Right lobe of liver (tissue), 6 donors: ENCODE measurements at regions of chr1 and their contacts with region 1.

Region 1: DNA sequence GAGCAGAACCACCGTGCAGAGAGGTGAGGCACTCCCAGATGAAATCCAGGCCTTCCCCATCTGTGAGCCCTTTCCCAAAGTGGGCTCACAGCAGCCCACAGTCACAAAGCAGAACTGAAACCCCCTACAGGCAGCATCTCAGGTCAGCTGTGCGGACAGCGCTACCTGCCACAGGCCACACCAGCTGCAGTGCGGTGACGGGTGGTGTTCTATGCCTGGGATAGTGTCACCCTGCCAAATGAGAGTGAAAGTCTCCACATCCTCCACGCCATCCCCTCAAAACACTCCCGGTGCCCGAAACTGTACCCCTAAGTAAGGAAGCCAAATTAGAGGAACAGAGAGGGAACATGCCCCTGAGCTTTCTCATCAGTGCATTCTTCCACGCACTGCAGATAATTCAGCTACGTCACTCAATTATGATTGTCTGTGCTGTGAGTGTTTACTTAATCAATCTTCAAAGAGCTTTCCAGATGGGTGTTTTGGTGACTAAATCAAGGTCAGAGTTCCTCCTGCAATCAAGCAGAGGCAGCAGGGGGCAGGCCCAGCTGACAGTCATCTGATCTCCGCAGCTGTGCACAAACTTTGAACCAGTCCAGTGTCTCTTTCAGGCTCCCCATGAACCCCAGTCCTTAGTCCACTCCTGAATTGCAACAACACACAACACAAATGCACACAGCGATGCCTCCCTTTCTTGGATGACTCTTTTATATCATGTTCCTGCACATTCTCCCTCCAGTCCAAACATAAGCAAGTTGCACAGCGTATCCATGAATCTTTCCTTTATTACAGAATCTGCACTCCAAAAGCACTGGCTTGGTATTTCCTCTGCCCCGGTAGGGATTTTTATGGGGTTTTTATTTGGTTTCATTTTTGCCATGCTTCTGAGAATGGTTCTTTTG is 150.0 kb downstream of the TOMM20 start:
- DNase-seq: peak; percentile 80 to 92 (median 88)
- ATAC-seq: peak; percentile 39 to 71 (median 54)
- H3K4me3 ChIP-seq: peak overlapping the region in 1 of 3 donors; percentile 5
- H3K27ac ChIP-seq: peak overlapping the region; percentile 95 to 99 (median 98)
- H3K4me1 ChIP-seq: peaks cover 0 to 69% (median 33%) of the 10 kb centered on the region in 4 donors
- H3K27me3 ChIP-seq: no peaks in the 10 kb centered on the region
- CTCF ChIP-seq: peak in 2 of 4 donors; percentile 5 to 11
- POLR2A ChIP-seq: peak; percentile 21

Region 2: GRCh38 chr1:234533975-234534876 is 444.4 kb before region 1 on chr1:
- intact Hi-C with region 1: loop called in 1 of 2 experiments (anchors 10 kb)
- DNase-seq: peak; percentile 92 to 99 (median 95)
- ATAC-seq: peak; percentile 12 to 49 (median 19)
- H3K4me3 ChIP-seq: no peak overlapping the region
- H3K27ac ChIP-seq: peak overlapping the region; percentile 90 to 99 (median 98)
- H3K4me1 ChIP-seq: peaks cover 4 to 74% (median 47%) of the 10 kb centered on the region in 4 donors
- H3K27me3 ChIP-seq: no peaks in the 10 kb centered on the region
- CTCF ChIP-seq: no peak
- POLR2A ChIP-seq: peak; percentile 19

Region 3: GRCh38 chr1:235075188-235075926 is 96.7 kb after region 1 on chr1:
- intact Hi-C with region 1: loop called (anchors 5 to 10 kb)
- DNase-seq: peak; percentile 67 to 83 (median 74)
- ATAC-seq: peak; percentile 26 to 55 (median 50)
- H3K4me3 ChIP-seq: peak overlapping the region; percentile 3 to 21 (median 19)
- H3K27ac ChIP-seq: peak overlapping the region; percentile 88 to 97 (median 94)
- H3K4me1 ChIP-seq: peaks cover 0 to 77% (median 40%) of the 10 kb centered on the region in 4 donors
- H3K27me3 ChIP-seq: no peaks in the 10 kb centered on the region
- CTCF ChIP-seq: no peak
- POLR2A ChIP-seq: peak; percentile 62

Region 4: DNA sequence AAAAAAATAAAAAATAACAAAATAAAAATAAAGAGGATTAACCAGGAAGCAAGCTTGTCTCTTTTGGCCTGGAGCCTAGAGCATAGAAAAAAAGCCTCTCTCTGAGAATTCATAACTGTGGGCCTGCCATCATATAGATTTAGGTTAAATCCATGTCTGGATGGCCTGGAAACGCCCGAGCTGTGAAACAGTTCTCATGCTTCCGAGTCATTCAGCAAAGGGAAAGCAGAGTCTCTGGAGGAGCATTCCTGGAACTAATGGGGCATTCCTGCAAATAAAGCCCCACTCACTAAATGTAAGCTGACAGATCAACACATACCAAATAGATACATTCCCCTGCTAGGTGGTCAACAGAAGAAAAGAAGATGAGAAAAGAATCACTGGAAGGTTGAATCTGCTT is 746.8 kb after region 1 on chr1:
- intact Hi-C with region 1: no loop called
- DNase-seq: no peak
- ATAC-seq: no peak
- H3K4me3 ChIP-seq: no peak overlapping the region
- H3K27ac ChIP-seq: no peak overlapping the region
- H3K4me1 ChIP-seq: no peaks in the 10 kb centered on the region
- H3K27me3 ChIP-seq: no peaks in the 10 kb centered on the region
- CTCF ChIP-seq: no peak
- POLR2A ChIP-seq: no peak